ENCODE measurements at regions of chr3 and their contacts with region 1.

Region 1: GRCh38 chr3:184289426-184289938 is 9.6 kb upstream of the PSMD2 start:
- DNase-seq: peak; percentile 63 to 75
- H3K4me3 ChIP-seq: no peak overlapping the region
- H3K27ac ChIP-seq: no peak overlapping the region
- H3K4me1 ChIP-seq: no peaks in the 10 kb centered on the region
- H3K27me3 ChIP-seq: no peaks in the 10 kb centered on the region; the same call in 1 of the 2 replicates
- CTCF ChIP-seq: peak; percentile 81

Region 2: GRCh38 chr3:183122257-183122932 is 1167.1 kb before region 1 on chr3:
- CTCF ChIA-PET with region 1: no interaction called
- POLR2A ChIA-PET with region 1: no interaction called
- intact Hi-C with region 1: loop called (anchors 2 kb)
- DNase-seq: peak; percentile 9 to 51
- H3K4me3 ChIP-seq: no peak overlapping the region
- H3K27ac ChIP-seq: no peak overlapping the region
- H3K4me1 ChIP-seq: peaks cover 17% of the 10 kb centered on the region
- H3K27me3 ChIP-seq: no peaks in the 10 kb centered on the region
- CTCF ChIP-seq: peak; percentile 99

Region 3: GRCh38 chr3:183825456-183826161 is 463.9 kb before region 1 on chr3 and contains the start of gene MAP6D1:
- CTCF ChIA-PET with region 1: no interaction called
- POLR2A ChIA-PET with region 1: no interaction called
- intact Hi-C with region 1: loop called (anchors 5 kb)
- DNase-seq: peak in 1 of 2 experiments; percentile 72
- H3K4me3 ChIP-seq: peak within 1 kb of the TSS; percentile 59; the same call in 1 of the 2 replicates
- H3K27ac ChIP-seq: no peak within 1 kb of the TSS
- H3K4me1 ChIP-seq: 0 out of 2 replicates have a peak, but pooled peaks cover 7% of the 10 kb centered on the region
- H3K27me3 ChIP-seq: no peaks in the 10 kb centered on the region
- CTCF ChIP-seq: no peak; the same call in 1 of the 2 replicates
- total RNA-seq, gene MAP6D1: 2.2 TPM in 2 replicates

Region 4: DNA sequence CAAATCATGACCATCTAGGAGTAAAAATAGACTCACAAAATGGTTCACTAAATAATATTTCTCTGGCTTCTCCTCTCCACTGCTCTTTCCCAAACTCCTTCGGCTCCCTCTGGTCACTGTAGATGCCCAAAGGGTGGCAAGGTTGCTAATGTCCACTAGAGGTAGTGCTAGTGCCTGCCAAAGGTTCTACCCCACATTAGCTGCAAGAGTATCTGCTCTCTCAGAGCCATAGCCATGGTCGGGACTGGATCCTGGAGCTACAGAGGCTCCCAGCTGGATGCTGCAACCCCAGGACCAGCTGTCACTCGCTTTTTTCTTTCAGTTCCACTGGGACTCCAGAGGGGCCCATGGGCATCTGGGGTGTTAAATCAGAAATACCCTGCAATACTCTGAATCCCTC is 249.5 kb before region 1 on chr3:
- CTCF ChIA-PET with region 1: interaction called, 8 read pairs
- POLR2A ChIA-PET with region 1: no interaction called
- intact Hi-C with region 1: loop called (anchors 5 kb)
- DNase-seq: peak in 1 of 2 experiments; percentile 44
- H3K4me3 ChIP-seq: no peak overlapping the region
- H3K27ac ChIP-seq: no peak overlapping the region
- H3K4me1 ChIP-seq: no peaks in the 10 kb centered on the region
- H3K27me3 ChIP-seq: no peaks in the 10 kb centered on the region
- CTCF ChIP-seq: peak; percentile 84

Region 5: GRCh38 chr3:184250167-184250828 is 39.2 kb before region 1 on chr3:
- CTCF ChIA-PET with region 1: interaction called, 5 read pairs
- POLR2A ChIA-PET with region 1: no interaction called
- intact Hi-C with region 1: loop called (anchors 2 kb)
- DNase-seq: peak; percentile 92 to 97
- H3K4me3 ChIP-seq: peak overlapping the region; percentile 96
- H3K27ac ChIP-seq: peak overlapping the region; percentile 90
- H3K4me1 ChIP-seq: peaks cover 18% of the 10 kb centered on the region
- H3K27me3 ChIP-seq: no peaks in the 10 kb centered on the region
- CTCF ChIP-seq: peak; percentile 97

Region 6: DNA sequence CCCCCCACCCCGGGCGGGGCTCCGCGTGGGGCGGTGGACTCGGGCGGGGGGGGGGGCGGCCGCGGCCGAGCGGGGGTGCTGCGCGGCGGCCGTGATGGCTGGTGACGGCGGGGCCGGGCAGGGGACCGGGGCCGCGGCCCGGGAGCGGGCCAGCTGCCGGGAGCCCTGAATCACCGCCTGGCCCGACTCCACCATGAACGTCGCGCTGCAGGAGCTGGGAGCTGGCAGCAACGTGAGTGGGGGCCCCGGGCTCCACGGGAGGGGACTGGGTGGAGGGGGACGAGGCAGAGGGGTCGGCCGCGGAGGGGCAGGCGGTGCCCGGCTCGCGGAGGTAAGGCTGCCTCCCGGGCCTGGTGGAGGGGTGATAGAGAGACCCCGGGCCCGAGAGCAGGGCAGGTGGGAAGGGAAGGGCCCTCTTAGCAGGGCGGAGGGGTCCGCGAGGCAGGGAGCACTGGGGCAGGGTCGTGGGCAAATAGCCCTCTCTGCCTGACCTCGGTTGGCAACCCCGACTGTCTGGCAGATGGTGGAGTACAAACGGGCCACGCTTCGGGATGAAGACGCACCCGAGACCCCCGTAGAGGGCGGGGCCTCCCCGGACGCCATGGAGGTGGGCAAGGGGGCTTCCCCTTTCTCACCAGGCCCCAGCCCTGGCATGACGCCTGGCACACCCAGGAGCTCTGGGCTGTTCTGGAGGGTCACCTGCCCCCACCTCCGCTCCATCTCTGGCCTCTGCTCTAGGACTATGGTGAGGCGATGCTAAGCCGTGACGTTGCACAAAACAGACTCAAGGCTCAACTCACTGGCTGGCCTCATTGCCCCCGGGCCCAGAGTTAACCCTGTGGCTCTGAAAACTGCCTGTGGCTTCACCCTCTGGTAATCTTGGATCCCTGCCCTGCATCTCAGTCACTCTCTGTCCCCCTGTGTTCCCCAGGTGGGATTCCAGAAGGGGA is 13.2 kb before region 1 on chr3 and contains the start of gene ECE2:
- CTCF ChIA-PET with region 1: interaction called, 12 read pairs
- POLR2A ChIA-PET with region 1: interaction called, 18 read pairs
- intact Hi-C with region 1: no loop called
- DNase-seq: no peak
- H3K4me3 ChIP-seq: no peak within 1 kb of the TSS
- H3K27ac ChIP-seq: no peak within 1 kb of the TSS
- H3K4me1 ChIP-seq: no peaks in the 10 kb centered on the region
- H3K27me3 ChIP-seq: peaks cover 48% of the 10 kb centered on the region
- CTCF ChIP-seq: no peak
- total RNA-seq, gene ECE2: not detected in 2 replicates

Region 7: GRCh38 chr3:184409331-184409926 is 119.9 kb after region 1 on chr3:
- CTCF ChIA-PET with region 1: no interaction called
- POLR2A ChIA-PET with region 1: no interaction called
- intact Hi-C with region 1: no loop called
- DNase-seq: no peak
- H3K4me3 ChIP-seq: no peak overlapping the region
- H3K27ac ChIP-seq: no peak overlapping the region
- H3K4me1 ChIP-seq: no peaks in the 10 kb centered on the region
- H3K27me3 ChIP-seq: peaks cover 56% of the 10 kb centered on the region
- CTCF ChIP-seq: no peak